Right lobe of liver (tissue), 6 donors: ENCODE measurements at regions of chr5 and their contacts with region 1.

Region 1: GRCh38 chr5:147098233-147098790 is 136.5 kb upstream of the STK32A start:
- DNase-seq: peak in 2 of 3 donors; percentile 22 to 56
- ATAC-seq: peak; percentile 85 to 93 (median 90)
- H3K4me3 ChIP-seq: no peak overlapping the region
- H3K27ac ChIP-seq: peak overlapping the region in 2 of 3 donors; percentile 25 to 54
- H3K4me1 ChIP-seq: no peaks in the 10 kb centered on the region
- H3K27me3 ChIP-seq: no peaks in the 10 kb centered on the region
- CTCF ChIP-seq: peak; percentile 56 to 75 (median 67)
- POLR2A ChIP-seq: no peak

Region 2: GRCh38 chr5:147188200-147189108 is 90.1 kb after region 1 on chr5:
- intact Hi-C with region 1: loop called in 1 of 2 experiments (anchors 5 kb)
- DNase-seq: no peak
- ATAC-seq: peak; percentile 88 to 98 (median 96)
- H3K4me3 ChIP-seq: peak overlapping the region in 1 of 3 donors; percentile 37
- H3K27ac ChIP-seq: no peak overlapping the region
- H3K4me1 ChIP-seq: no peaks in the 10 kb centered on the region
- H3K27me3 ChIP-seq: no peaks in the 10 kb centered on the region
- CTCF ChIP-seq: peak; percentile 86 to 97 (median 93)
- POLR2A ChIP-seq: no peak

Region 3: GRCh38 chr5:147223948-147224791 is 125.9 kb after region 1 on chr5:
- intact Hi-C with region 1: no loop called
- DNase-seq: no peak
- ATAC-seq: peak in 2 of 4 donors; percentile 51 to 60
- H3K4me3 ChIP-seq: no peak overlapping the region
- H3K27ac ChIP-seq: no peak overlapping the region
- H3K4me1 ChIP-seq: no peaks in the 10 kb centered on the region
- H3K27me3 ChIP-seq: no peaks in the 10 kb centered on the region
- CTCF ChIP-seq: peak; percentile 30 to 50 (median 38)
- POLR2A ChIP-seq: no peak